CD4-positive, alpha-beta T cell (primary cell): ENCODE measurements at regions of chr3 and their contacts with region 1.

Region 1: GRCh38 chr3:42613462-42613861 is 13.0 kb downstream of the NKTR start:
- DNase-seq: peak in 3 of 14 experiments; percentile 27 to 51 (median 37)
- ATAC-seq: peak; percentile 48
- H3K4me3 ChIP-seq: no peak overlapping the region
- H3K4me3 Mint-ChIP-seq: peak overlapping the region; percentile 1
- H3K27ac ChIP-seq: no peak overlapping the region
- H3K27ac Mint-ChIP-seq: peak overlapping the region; percentile 37
- H3K4me1 ChIP-seq: peaks cover 17% of the 10 kb centered on the region
- H3K4me1 Mint-ChIP-seq: peaks cover 73% of the 10 kb centered on the region
- H3K27me3 ChIP-seq: no peaks in the 10 kb centered on the region
- H3K27me3 Mint-ChIP-seq: no peaks in the 10 kb centered on the region
- CTCF ChIP-seq: peak; percentile 46

Region 2: DNA sequence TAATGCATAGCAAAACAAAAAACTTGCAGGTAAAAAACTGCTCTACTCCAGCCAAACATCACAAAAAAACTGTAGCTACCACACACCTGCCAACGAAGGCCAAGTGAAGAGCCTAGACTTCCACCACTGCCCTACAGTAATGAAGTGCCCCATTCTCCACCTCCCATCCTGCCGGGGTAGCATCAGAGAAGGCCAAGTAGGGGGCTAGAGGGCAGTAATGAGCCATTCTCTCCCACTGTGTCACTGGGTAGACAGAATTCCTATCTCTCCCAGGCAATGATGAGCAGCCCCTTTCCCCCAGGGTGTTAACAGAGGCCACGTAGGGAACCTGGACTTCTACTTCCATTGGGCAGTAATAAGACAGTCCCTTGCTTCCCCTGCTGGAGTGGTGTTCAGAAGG is 41.2 kb before region 1 on chr3:
- CTCF ChIA-PET with region 1: interaction called, 4 read pairs
- POLR2A ChIA-PET with region 1: interaction called, 3 read pairs
- intact Hi-C with region 1: loop called in 1 of 2 experiments (anchors 5 kb)
- DNase-seq: peak in 6 of 14 experiments; percentile 8 to 59 (median 38)
- ATAC-seq: peak; percentile 57
- H3K4me3 ChIP-seq: no peak overlapping the region
- H3K4me3 Mint-ChIP-seq: no peak overlapping the region
- H3K27ac ChIP-seq: no peak overlapping the region
- H3K27ac Mint-ChIP-seq: no peak overlapping the region
- H3K4me1 ChIP-seq: no peaks in the 10 kb centered on the region
- H3K4me1 Mint-ChIP-seq: peaks cover 29% of the 10 kb centered on the region
- H3K27me3 ChIP-seq: no peaks in the 10 kb centered on the region
- H3K27me3 Mint-ChIP-seq: no peaks in the 10 kb centered on the region
- CTCF ChIP-seq: peak; percentile 29

Region 3: GRCh38 chr3:42652611-42653302 is 39.3 kb after region 1 on chr3:
- CTCF ChIA-PET with region 1: no interaction called
- POLR2A ChIA-PET with region 1: no interaction called
- intact Hi-C with region 1: loop called in 1 of 2 experiments (anchors 5 kb)
- DNase-seq: peak in 2 of 14 experiments; percentile 50 to 57
- ATAC-seq: no peak
- H3K4me3 ChIP-seq: no peak overlapping the region
- H3K4me3 Mint-ChIP-seq: peak overlapping the region; percentile 76
- H3K27ac ChIP-seq: no peak overlapping the region
- H3K27ac Mint-ChIP-seq: no peak overlapping the region
- H3K4me1 ChIP-seq: peaks cover 31% of the 10 kb centered on the region
- H3K4me1 Mint-ChIP-seq: peaks cover 33% of the 10 kb centered on the region
- H3K27me3 ChIP-seq: no peaks in the 10 kb centered on the region
- H3K27me3 Mint-ChIP-seq: no peaks in the 10 kb centered on the region
- CTCF ChIP-seq: no peak